Posterior cingulate gyrus (tissue), 11 donors: ENCODE measurements at regions of chr1 and their contacts with region 1.

Region 1: DNA sequence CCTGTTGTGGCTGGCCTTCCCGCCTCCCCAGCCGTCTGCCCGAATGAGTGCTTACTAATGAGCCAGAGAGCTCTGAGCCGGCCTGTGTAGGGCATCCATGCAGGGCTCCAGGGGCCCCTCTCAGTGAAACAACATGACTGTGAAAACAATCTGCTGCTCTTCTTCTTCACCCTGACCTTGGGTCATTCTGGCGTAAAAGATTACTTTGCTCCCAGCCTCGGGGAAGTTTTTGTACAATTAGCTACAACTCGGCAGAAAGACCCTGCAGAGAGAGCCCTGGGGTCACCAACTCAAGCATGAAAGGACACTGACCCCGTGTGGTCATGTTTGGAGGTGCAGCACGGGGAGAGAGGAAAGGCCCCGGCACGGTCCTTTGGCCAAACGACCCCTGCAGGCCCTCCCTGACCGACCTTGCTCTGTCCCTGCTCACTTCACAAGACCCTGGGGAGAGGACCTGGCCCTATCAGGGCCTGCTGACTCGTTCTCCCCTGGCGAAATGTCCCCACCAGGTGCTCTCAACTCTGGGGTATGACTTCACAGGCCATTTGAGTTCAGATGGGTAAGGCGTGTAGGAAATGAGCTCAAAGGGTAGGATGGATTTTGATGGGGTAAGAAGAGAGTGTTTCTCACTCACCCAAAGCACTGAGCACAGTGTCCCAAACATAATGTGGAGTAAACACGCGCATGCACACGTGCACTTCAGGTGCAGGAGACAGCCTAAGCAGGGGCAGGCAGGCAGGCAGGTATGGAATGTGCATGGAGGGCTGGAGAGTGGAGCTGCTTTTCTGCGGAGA is 22.9 kb upstream of the FAM20B start:
- DNase-seq: peak; percentile 33 to 95 (median 76)

Region 2: GRCh38 chr1:178532392-178532791 is 470.4 kb before region 1 on chr1:
- intact Hi-C with region 1: loop called (anchors 2 kb)
- DNase-seq: peak; percentile 71 to 98 (median 88)

Region 3: DNA sequence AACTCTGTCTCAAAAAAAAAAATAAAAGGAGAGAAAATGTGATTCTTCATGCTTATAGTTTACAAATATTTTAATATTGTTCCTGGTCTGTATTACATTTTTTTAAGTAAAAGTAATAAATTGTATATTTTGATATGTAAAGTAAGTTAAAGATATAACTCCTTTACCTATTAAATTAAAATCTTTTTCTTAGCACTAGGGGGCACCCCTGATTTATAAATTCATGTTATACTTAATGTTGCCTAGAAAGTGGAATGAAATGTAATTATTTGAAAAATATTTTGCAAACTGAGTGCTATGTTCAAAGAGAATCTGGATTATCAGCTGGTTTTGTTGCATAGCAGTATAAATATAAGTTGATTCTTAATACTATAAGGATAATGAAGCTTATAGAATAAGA is 228.5 kb before region 1 on chr1:
- intact Hi-C with region 1: loop called (anchors 5 kb)
- DNase-seq: no peak

Region 4: DNA sequence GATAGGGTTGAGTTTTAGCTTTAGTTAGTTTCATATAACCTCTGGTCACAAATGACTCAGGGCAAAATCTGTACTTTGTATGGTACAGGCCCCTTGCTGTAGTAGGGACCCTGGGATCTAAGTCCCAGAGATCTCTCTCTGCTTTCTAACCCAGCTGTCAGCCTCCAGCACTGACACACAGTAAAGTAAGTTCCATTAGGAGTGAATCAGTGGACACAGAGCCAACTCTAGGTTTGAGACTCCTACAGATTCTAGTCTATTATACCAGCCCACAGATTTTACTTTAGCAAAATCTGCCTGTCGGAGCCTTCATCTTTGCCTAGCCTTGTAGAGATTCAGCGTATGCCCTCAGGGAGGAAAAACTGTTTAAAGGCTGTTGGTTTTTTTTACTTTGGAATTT is 184.3 kb before region 1 on chr1:
- intact Hi-C with region 1: loop called (anchors 2 kb)
- DNase-seq: no peak

Region 5: GRCh38 chr1:179351281-179351680 is 348.5 kb after region 1 on chr1:
- intact Hi-C with region 1: no loop called
- DNase-seq: no peak